ENCODE measurements at regions of chr18 and their contacts with region 1.

Region 1: GRCh38 chr18:58541789-58542425 is 87.0 kb downstream of the ALPK2 start:
- DNase-seq: peak; percentile 61
- H3K4me3 Mint-ChIP-seq: no peak overlapping the region
- H3K27ac Mint-ChIP-seq: peak overlapping the region; percentile 12
- H3K4me1 Mint-ChIP-seq: peaks cover 49% of the 10 kb centered on the region
- H3K27me3 Mint-ChIP-seq: peaks cover 42% of the 10 kb centered on the region

Region 2: GRCh38 chr18:58529714-58530354 is 12.1 kb before region 1 on chr18:
- CTCF ChIA-PET with region 1: interaction called, 15 read pairs
- POLR2A ChIA-PET with region 1: no interaction called
- DNase-seq: peak; percentile 63
- H3K4me3 Mint-ChIP-seq: no peak overlapping the region
- H3K27ac Mint-ChIP-seq: no peak overlapping the region
- H3K4me1 Mint-ChIP-seq: peaks cover 4% of the 10 kb centered on the region
- H3K27me3 Mint-ChIP-seq: peaks cover 26% of the 10 kb centered on the region

Region 3: DNA sequence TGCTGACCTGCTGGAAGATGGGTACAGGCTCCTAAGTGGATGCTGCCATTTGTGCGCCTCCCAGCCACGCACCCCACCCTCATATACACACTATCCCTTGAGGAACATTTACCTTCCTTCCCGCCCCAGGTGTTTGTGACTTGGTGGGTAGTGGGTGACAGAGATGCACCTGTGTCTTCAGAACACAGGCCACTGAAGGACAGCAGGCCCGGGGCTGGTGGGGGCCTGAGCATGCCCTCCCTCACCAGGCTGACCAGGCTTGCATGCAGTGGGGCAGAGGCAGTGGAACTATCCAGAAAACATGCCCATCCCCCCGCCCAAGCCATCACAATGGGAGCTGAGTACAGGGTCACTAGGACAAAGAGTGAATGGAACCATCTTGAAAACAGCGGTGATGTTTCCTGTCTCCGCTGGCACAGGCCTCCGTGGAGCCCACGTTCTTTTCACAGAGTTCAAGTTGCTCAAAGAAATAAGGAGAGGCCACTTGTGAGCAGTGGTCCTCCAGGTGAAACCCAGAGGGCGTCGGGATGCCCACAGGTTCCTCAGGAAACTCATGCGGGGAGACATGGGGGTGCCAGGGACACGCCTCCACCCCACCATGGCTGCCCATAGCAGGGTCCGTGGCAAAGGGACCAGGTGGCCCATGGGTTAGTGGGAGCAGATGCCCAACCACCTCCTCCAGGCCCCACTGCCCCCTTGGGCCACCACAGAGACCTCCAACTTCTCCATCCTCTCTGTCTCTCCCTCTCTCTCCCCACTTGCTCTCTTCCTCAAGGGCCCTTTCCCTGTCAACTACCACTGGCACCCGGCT is 220.3 kb after region 1 on chr18:
- CTCF ChIA-PET with region 1: interaction called, 32 read pairs
- POLR2A ChIA-PET with region 1: no interaction called
- DNase-seq: no peak
- H3K4me3 Mint-ChIP-seq: no peak overlapping the region
- H3K27ac Mint-ChIP-seq: no peak overlapping the region
- H3K4me1 Mint-ChIP-seq: peaks cover 15% of the 10 kb centered on the region
- H3K27me3 Mint-ChIP-seq: peaks cover 41% of the 10 kb centered on the region